Gastrocnemius medialis (tissue), 4 donors: ENCODE measurements at regions of chr1 and their contacts with region 1.

Region 1: DNA sequence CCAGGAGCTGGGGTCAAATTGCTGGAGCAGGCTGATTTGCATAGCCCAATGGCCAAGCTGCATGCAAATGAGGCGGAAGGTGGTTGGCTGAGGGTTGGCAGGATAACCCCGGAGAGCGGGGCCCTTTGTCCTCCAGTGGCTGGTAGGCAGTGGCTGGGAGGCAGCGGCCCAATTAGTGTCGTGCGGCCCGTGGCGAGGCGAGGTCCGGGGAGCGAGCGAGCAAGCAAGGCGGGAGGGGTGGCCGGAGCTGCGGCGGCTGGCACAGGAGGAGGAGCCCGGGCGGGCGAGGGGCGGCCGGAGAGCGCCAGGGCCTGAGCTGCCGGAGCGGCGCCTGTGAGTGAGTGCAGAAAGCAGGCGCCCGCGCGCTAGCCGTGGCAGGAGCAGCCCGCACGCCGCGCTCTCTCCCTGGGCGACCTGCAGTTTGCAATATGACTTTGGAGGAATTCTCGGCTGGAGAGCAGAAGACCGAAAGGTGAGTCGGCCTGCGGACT is at the start of gene GADD45A:
- DNase-seq: peak; percentile 99 to 100
- ATAC-seq: peak; percentile 84 to 86
- H3K4me3 ChIP-seq: peak within 1 kb of the TSS; percentile 75 to 89 (median 88)
- H3K27ac ChIP-seq: peak within 1 kb of the TSS; percentile 97 to 99 (median 98)
- H3K4me1 ChIP-seq: peaks cover 27 to 28% of the 10 kb centered on the region in 2 donors
- H3K27me3 ChIP-seq: no peaks in the 10 kb centered on the region
- CTCF ChIP-seq: no peak
- POLR2A ChIP-seq: peak; percentile 99 to 100
- total RNA-seq, gene GADD45A: 80.4 to 188 (median 142) TPM

Region 2: DNA sequence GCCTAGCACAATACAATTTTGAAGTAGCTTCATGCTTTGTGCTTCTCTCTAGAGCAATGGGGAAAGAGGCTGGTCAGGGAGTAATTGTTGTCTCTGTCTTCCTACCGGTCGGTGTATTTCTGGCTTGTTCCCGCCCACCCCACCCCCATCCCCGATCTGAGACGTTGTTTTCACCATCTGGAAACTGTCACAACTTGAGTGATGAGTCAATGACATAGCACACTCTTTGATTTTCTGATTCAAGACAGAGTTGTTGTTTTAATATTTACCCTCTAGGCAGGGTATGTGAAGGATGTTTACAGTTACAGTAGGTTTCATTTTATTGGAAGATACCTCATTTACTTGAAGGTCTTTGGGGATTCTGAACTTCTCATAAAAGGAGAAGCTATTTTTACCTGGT is 370.4 kb before region 1 on chr1:
- in situ Hi-C with region 1: no loop called
- intact Hi-C with region 1: loop called (anchors 10 kb)
- DNase-seq: no peak
- ATAC-seq: peak; percentile 28 to 46
- H3K4me3 ChIP-seq: no peak overlapping the region
- H3K27ac ChIP-seq: peak overlapping the region; percentile 49 to 81 (median 74)
- H3K4me1 ChIP-seq: peaks cover 12 to 29% of the 10 kb centered on the region in 2 donors
- H3K27me3 ChIP-seq: no peaks in the 10 kb centered on the region
- CTCF ChIP-seq: no peak
- POLR2A ChIP-seq: no peak

Region 3: GRCh38 chr1:67570473-67571143 is 114.5 kb before region 1 on chr1:
- in situ Hi-C with region 1: loop called in 3 of 4 experiments (anchors 10 to 25 kb)
- intact Hi-C with region 1: loop called (anchors 1 kb)
- DNase-seq: no peak
- ATAC-seq: peak in 1 of 2 donors; percentile 7
- H3K4me3 ChIP-seq: no peak overlapping the region
- H3K27ac ChIP-seq: peak overlapping the region; percentile 90 to 96 (median 92)
- H3K4me1 ChIP-seq: peaks cover 27 to 44% of the 10 kb centered on the region in 2 donors
- H3K27me3 ChIP-seq: no peaks in the 10 kb centered on the region
- CTCF ChIP-seq: no peak
- POLR2A ChIP-seq: no peak

Region 4: GRCh38 chr1:67608661-67609571 is 76.2 kb before region 1 on chr1:
- in situ Hi-C with region 1: no loop called
- intact Hi-C with region 1: no loop called
- DNase-seq: no peak
- ATAC-seq: no peak
- H3K4me3 ChIP-seq: no peak overlapping the region
- H3K27ac ChIP-seq: no peak overlapping the region
- H3K4me1 ChIP-seq: no peaks in the 10 kb centered on the region
- H3K27me3 ChIP-seq: no peaks in the 10 kb centered on the region
- CTCF ChIP-seq: no peak
- POLR2A ChIP-seq: no peak

Region 5: GRCh38 chr1:67652800-67653199 is 32.3 kb before region 1 on chr1:
- in situ Hi-C with region 1: no loop called
- intact Hi-C with region 1: loop called (anchors 1 kb)
- DNase-seq: peak; percentile 86 to 88
- ATAC-seq: peak; percentile 100
- H3K4me3 ChIP-seq: peak overlapping the region in 1 of 4 donors; percentile 26
- H3K27ac ChIP-seq: peak overlapping the region; percentile 79 to 87 (median 82)
- H3K4me1 ChIP-seq: peaks cover 13 to 17% of the 10 kb centered on the region in 2 donors
- H3K27me3 ChIP-seq: no peaks in the 10 kb centered on the region
- CTCF ChIP-seq: peak in 1 of 5 experiments; percentile 17
- POLR2A ChIP-seq: peak; percentile 61 to 83

Region 6: GRCh38 chr1:67760030-67760821 is 75.1 kb after region 1 on chr1:
- in situ Hi-C with region 1: loop called in 1 of 4 experiments (anchors 5 kb)
- intact Hi-C with region 1: loop called (anchors 2 kb)
- DNase-seq: peak in 1 of 2 donors; percentile 48
- ATAC-seq: peak; percentile 84 to 87
- H3K4me3 ChIP-seq: no peak overlapping the region
- H3K27ac ChIP-seq: peak overlapping the region; percentile 65 to 75 (median 71)
- H3K4me1 ChIP-seq: peaks cover 21 to 28% of the 10 kb centered on the region in 2 donors
- H3K27me3 ChIP-seq: no peaks in the 10 kb centered on the region
- CTCF ChIP-seq: peak; percentile 85 to 93 (median 89)
- POLR2A ChIP-seq: no peak